CD14-positive monocyte (primary cell): ENCODE measurements at regions of chr1 and their contacts with region 1.

Region 1: GRCh38 chr1:11272832-11273594 is at the start of gene UBIAD1:
- DNase-seq: peak; percentile 74 to 88 (median 84)
- H3K4me3 ChIP-seq: peak within 1 kb of the TSS; percentile 69 to 95 (median 84)
- H3K4me3 Mint-ChIP-seq: peak within 1 kb of the TSS; percentile 82 to 87
- H3K27ac ChIP-seq: peak within 1 kb of the TSS; percentile 84 to 94
- H3K27ac Mint-ChIP-seq: peak within 1 kb of the TSS; percentile 79 to 94 (median 87)
- H3K4me1 ChIP-seq: peaks cover 25 to 29% of the 10 kb centered on the region in 2 donors
- H3K4me1 Mint-ChIP-seq: peaks cover 27% of the 10 kb centered on the region
- H3K27me3 ChIP-seq: no peaks in the 10 kb centered on the region
- H3K27me3 Mint-ChIP-seq: peaks cover 0 to 4% (median 0%) of the 10 kb centered on the region in 3 donors
- CTCF ChIP-seq: no peak
- polyA plus RNA-seq, gene UBIAD1: 4.3 to 10.5 (median 9.8) TPM

Region 2: DNA sequence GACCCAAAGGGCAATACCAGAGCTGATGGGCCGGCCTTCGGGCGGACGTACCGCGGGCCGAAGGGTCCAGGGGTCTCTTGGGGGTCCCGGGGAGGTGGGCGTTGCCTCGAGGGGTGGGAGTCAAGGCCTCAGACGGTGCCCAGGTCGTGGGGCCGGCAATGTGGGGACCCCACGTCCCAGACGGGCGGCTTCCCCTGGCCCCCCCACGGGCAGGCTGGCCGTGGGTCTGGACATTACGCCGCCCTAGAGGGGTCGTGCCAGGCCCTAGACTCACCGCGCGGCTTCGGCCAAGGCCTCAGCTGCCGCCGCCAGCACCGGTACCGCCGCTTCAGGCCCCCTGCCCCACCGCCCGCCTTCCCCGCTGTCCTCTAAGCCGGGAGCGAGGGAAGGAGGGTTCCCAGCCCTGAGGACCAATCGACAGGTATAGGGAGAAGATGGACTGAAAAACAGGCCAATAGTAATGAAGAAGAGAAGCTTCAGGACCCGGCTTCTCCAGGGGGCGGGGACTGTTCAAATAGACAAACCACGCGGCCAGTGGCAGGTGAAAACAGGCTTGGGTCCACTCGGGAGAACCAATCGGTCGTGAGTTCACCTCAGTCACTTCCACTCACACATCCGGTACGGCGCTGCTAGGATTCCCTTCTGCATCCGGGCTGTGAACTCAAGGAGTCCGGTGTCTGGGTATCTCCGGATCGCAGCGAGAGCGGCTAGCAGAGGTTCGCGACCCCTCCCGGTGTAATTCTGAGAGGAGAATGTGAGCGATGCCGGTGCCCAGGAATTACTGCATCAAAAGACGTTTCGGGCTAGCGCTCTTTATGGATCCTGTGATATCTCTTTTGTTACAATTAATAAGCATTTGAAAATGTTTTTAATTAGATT is 10.6 kb before region 1 on chr1 and contains the start of gene MTOR:
- intact Hi-C with region 1: loop called in 1 of 2 experiments (anchors 1 kb)
- DNase-seq: peak; percentile 98 to 100 (median 99)
- H3K4me3 ChIP-seq: peak within 1 kb of the TSS; percentile 89 to 95 (median 90)
- H3K4me3 Mint-ChIP-seq: peak within 1 kb of the TSS; percentile 83 to 97
- H3K27ac ChIP-seq: peak within 1 kb of the TSS; percentile 25 to 69
- H3K27ac Mint-ChIP-seq: peak within 1 kb of the TSS; percentile 78 to 93 (median 87)
- H3K4me1 ChIP-seq: peaks cover 14 to 16% of the 10 kb centered on the region in 2 donors
- H3K4me1 Mint-ChIP-seq: peaks cover 11% of the 10 kb centered on the region
- H3K27me3 ChIP-seq: no peaks in the 10 kb centered on the region
- H3K27me3 Mint-ChIP-seq: peaks cover 1 to 7% (median 2%) of the 10 kb centered on the region in 3 donors
- CTCF ChIP-seq: no peak
- polyA plus RNA-seq, gene MTOR: 2.0 to 29.4 (median 3.3) TPM

Region 3: DNA sequence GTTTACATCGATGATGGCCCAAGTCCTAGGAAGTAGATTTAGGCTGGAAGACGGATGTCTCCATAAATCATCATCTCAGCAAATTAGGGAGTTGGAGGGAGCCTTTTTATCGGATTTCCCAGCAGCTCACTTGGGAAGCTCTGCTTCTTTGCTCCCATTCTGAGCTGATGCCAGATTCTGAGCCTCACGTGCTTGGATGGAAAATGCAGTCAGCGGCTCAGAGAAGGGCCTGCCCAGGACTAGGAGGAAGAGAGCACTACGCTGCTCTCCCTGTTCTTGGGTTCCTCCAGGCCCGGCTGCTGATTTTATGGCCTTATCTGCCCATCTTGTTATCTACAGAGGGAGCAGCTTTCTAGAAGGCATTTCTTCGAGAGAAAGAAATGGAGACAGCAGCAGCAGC is 41.9 kb after region 1 on chr1:
- intact Hi-C with region 1: no loop called
- DNase-seq: no peak
- H3K4me3 ChIP-seq: no peak overlapping the region
- H3K4me3 Mint-ChIP-seq: no peak overlapping the region
- H3K27ac ChIP-seq: no peak overlapping the region
- H3K27ac Mint-ChIP-seq: no peak overlapping the region
- H3K4me1 ChIP-seq: no peaks in the 10 kb centered on the region
- H3K4me1 Mint-ChIP-seq: no peaks in the 10 kb centered on the region
- H3K27me3 ChIP-seq: no peaks in the 10 kb centered on the region
- H3K27me3 Mint-ChIP-seq: peaks cover 3 to 13% (median 8%) of the 10 kb centered on the region in 3 donors
- CTCF ChIP-seq: no peak